ENCODE measurements at regions of chr19 and their contacts with region 1.

Region 1: DNA sequence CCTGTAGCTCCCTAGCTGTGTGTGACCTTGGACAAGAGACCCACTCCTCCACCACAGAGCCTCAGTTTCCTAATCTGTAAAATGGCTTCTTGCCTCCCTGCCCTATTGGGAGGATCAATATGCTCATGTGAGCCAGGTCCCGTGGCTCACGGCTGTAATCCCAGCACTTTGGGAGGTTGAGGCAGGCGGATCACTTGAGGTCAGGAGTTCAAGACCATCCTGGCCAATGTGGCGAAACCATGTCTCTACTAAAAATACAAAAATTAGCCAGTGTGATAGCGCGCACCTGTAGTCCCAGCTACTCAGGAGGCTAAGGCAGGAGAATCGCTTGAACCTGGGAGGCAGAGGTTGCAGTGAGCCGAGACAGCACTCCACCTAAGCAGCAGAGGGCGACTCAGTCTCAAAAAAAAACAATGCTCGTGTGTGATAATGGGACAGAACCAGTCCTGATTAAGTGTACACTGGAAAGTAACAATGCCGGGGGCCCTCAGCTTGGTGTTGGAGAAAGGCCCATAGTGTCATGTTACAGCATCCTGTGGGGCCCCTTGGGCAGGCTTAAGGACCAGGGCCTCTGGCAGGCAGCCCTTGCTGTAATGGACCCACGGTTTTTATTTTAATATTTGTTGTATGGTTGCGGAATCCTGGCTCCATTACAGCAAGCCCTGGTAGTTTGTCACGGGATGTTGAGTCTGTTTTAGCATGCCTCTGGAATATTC is 6.8 kb downstream of the RPS11 start:
- DNase-seq: peak; percentile 64
- H3K4me3 Mint-ChIP-seq: no peak overlapping the region
- H3K27ac Mint-ChIP-seq: peak overlapping the region; percentile 51
- H3K4me1 Mint-ChIP-seq: peaks cover 45% of the 10 kb centered on the region
- H3K27me3 Mint-ChIP-seq: no peaks in the 10 kb centered on the region

Region 2: DNA sequence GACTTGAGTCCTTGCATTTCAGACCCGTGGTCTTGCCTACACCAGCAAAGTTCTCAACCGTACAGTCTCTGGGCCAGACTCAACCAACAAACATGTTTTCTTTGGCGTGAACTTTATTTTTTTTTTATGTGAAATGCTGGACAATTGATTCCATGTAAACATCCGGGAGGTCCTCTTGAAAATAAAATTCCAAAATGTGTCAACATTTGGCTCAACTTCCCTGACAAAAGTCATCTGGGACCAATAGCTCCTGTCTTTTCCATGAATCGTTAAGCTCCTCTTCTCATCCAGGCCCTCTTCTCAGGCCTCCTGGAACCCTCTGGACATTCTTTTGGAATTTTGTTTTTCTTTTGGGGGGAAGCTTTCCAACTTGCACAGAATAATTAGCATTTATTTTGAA is 47.3 kb before region 1 on chr19:
- CTCF ChIA-PET with region 1: no interaction called
- POLR2A ChIA-PET with region 1: no interaction called
- intact Hi-C with region 1: no loop called
- DNase-seq: no peak
- H3K4me3 Mint-ChIP-seq: no peak overlapping the region
- H3K27ac Mint-ChIP-seq: no peak overlapping the region
- H3K4me1 Mint-ChIP-seq: peaks cover 24% of the 10 kb centered on the region
- H3K27me3 Mint-ChIP-seq: no peaks in the 10 kb centered on the region

Region 3: GRCh38 chr19:49481020-49481683 is 21.9 kb before region 1 on chr19:
- CTCF ChIA-PET with region 1: no interaction called
- POLR2A ChIA-PET with region 1: no interaction called
- intact Hi-C with region 1: no loop called
- DNase-seq: no peak
- H3K4me3 Mint-ChIP-seq: no peak overlapping the region
- H3K27ac Mint-ChIP-seq: peak overlapping the region; percentile 34
- H3K4me1 Mint-ChIP-seq: peaks cover 12% of the 10 kb centered on the region
- H3K27me3 Mint-ChIP-seq: no peaks in the 10 kb centered on the region

Region 4: GRCh38 chr19:49512970-49513745 is 10.1 kb after region 1 on chr19:
- CTCF ChIA-PET with region 1: interaction called, 11 read pairs
- POLR2A ChIA-PET with region 1: no interaction called
- intact Hi-C with region 1: no loop called
- DNase-seq: peak; percentile 50
- H3K4me3 Mint-ChIP-seq: peak overlapping the region; percentile 79
- H3K27ac Mint-ChIP-seq: peak overlapping the region; percentile 65
- H3K4me1 Mint-ChIP-seq: peaks cover 27% of the 10 kb centered on the region
- H3K27me3 Mint-ChIP-seq: no peaks in the 10 kb centered on the region

Region 5: DNA sequence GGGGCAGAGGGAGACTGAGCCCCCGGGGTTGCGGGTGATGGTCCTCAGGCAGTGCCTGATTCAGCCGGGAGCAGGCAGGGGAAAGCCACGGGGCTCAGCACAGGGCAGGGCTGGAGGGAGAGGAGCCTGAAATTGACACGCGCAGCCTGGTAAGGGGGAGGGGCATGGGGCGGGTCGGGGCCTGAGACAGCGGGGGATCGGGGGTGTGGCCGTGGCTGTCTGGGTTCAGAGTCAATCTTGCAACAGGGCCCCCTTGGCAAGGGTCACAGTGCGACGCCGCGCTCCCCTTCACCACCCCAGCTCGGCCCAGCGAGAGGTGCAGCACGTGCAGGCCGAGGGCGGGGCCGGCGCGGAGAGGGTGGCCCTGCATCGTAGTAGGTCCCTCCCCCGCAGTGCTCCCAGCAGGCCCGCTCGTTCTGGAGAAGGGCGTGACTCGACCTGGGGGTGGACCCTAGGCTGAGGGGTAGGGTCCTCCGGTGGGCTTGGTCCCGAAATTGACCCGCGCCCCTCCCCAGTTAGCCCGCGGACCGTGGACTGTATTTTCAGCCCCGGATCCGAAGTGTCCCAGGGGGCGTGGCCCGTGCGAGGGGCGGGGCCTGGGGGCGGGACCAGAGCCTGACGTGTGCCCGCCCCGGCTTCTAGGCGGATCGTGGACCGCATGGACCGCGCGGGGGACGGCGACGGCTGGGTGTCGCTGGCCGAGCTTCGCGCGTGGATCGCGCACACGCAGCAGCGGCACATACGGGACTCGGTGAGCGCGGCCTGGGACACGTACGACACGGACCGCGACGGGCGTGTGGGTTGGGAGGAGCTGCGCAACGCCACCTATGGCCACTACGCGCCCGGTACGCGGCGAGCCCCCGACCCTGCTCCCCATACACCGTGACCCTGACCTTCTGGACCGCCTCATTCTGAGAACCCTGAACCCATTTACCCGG is 30.8 kb after region 1 on chr19:
- CTCF ChIA-PET with region 1: interaction called, 15 read pairs
- POLR2A ChIA-PET with region 1: no interaction called
- intact Hi-C with region 1: no loop called
- DNase-seq: peak; percentile 83
- H3K4me3 Mint-ChIP-seq: peak overlapping the region; percentile 75
- H3K27ac Mint-ChIP-seq: no peak overlapping the region
- H3K4me1 Mint-ChIP-seq: peaks cover 20% of the 10 kb centered on the region
- H3K27me3 Mint-ChIP-seq: no peaks in the 10 kb centered on the region

Region 6: DNA sequence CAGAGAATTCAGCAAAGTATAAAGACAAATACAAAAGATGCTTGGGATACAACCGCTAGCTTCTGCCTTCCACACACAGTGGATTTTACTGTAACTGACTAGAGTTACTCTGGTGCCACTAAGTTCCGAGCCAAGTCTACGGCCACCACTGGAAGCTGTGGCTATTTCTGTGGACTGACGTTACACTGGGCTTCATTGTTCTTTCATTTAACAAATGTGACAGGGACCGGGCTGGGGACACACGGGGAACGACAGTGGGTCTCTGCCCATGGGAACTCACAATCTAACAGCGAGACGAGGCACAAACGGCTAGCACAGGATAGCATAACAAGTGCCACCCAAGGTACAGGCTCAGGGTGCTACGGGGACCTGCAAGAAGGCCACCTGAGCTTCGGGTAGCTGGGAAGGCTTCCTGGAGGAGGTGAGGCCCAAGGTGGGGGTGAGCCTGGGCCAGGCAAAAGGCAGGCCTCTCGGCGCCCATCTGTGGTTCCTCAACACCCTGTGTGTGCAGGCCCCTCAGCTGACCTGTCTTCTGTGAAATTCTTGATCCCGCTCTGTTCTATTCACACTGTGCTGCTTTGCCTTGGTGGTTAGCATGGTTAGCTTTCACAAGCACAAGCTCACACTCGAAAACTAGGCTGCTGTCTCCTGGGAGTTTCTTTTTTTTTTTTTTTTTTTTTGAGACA is 404.0 kb after region 1 on chr19:
- CTCF ChIA-PET with region 1: no interaction called
- POLR2A ChIA-PET with region 1: no interaction called
- intact Hi-C with region 1: no loop called
- DNase-seq: no peak
- H3K4me3 Mint-ChIP-seq: no peak overlapping the region
- H3K27ac Mint-ChIP-seq: peak overlapping the region; percentile 72
- H3K4me1 Mint-ChIP-seq: peaks cover 69% of the 10 kb centered on the region
- H3K27me3 Mint-ChIP-seq: no peaks in the 10 kb centered on the region